ENCODE measurements at regions of chr4 and their contacts with region 1.

Region 1: DNA sequence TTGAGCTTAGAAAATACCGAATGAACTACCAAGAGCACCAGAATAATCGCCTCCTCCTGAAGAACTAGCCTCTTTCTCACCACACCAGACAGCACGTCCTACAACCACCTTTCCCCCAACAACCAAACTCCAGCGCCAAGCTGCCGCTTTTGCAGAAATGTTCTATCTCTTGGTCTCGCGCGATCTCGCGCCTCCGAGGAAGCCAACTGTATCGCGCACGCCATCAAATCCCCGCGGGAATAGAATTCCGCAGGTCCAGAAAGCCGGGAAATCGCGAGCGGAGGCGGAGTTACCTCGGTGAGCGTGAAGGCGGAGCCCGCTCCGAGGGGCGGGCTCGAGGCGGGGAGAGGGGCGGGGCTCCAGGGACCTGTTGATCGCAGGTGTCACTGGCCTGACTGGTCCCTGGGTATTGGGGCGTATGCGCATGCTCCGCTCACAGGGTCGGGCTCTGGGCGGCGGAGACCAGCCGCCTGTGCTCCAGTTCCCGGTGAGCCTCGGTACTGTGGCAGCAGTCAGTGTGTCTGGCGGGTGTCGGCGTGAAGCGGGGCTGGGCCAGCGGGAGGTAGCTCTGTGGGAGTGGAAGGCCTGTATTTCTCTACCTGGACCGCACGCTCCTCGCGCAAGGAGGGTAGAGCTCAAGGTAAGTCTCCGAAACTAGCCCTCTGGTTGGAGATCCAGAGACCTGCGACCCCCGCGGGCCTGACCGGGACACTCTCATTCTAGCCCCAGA is at the start of gene USP53:
- DNase-seq: peak; percentile 99
- ATAC-seq: peak; percentile 92
- H3K4me3 Mint-ChIP-seq: peak within 1 kb of the TSS; percentile 86
- H3K27ac Mint-ChIP-seq: peak within 1 kb of the TSS; percentile 91
- H3K4me1 Mint-ChIP-seq: peaks cover 39% of the 10 kb centered on the region
- H3K27me3 Mint-ChIP-seq: no peaks in the 10 kb centered on the region
- total RNA-seq, gene USP53: 11.4 to 14.0 TPM

Region 2: DNA sequence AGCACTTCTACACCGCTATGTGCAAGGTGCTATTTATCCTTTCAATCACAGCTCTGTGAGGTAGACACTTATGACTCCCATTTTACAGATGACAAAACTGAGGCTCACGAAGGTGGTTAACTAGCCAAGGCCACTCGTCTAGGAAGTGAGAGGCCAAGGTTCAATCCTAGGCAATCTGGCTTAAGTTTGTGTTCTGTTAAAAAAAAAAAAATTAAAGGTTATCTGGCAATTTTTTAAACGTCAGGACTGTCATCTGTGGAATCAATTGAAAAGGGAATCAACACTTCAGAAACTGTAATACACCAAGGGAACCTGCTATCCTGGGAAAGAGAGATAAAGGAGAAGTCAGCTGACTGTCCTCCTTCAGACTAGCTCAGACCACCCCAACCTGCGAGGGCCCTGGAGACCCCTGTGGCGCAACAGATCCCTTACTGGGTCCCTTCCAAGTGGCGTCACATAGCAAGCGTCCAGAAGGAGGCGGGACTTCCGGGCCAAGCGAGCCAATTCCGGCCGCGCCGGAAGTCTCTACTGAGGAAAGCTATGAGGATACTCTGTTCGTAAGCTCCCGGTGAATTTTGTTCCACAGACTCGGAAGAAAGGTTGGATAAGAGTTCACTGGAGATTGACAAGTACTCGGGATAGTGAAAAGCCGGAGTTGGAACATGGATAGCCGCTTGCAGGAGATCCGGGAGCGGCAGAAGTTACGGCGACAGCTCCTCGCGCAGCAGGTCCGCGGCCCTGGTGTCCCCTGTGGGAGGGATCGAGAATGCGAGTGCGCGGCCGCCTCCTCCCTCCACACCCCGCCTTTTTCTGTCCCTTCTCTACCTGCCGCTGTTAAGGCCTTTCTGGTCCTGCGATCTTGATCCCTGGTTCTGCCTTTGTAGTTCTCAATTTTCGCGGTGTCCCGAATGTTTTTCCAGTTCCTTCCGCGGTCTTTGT is 527.3 kb before region 1 on chr4 and contains the start of gene METTL14:
- CTCF ChIA-PET with region 1: no interaction called
- POLR2A ChIA-PET with region 1: no interaction called
- intact Hi-C with region 1: loop called in 1 of 2 experiments (anchors 2 kb)
- DNase-seq: peak; percentile 93
- ATAC-seq: peak; percentile 96
- H3K4me3 Mint-ChIP-seq: peak within 1 kb of the TSS; percentile 99
- H3K27ac Mint-ChIP-seq: peak within 1 kb of the TSS; percentile 90
- H3K4me1 Mint-ChIP-seq: peaks cover 24% of the 10 kb centered on the region
- H3K27me3 Mint-ChIP-seq: peaks cover 2% of the 10 kb centered on the region
- total RNA-seq, gene METTL14: 45.1 to 48.4 TPM

Region 3: DNA sequence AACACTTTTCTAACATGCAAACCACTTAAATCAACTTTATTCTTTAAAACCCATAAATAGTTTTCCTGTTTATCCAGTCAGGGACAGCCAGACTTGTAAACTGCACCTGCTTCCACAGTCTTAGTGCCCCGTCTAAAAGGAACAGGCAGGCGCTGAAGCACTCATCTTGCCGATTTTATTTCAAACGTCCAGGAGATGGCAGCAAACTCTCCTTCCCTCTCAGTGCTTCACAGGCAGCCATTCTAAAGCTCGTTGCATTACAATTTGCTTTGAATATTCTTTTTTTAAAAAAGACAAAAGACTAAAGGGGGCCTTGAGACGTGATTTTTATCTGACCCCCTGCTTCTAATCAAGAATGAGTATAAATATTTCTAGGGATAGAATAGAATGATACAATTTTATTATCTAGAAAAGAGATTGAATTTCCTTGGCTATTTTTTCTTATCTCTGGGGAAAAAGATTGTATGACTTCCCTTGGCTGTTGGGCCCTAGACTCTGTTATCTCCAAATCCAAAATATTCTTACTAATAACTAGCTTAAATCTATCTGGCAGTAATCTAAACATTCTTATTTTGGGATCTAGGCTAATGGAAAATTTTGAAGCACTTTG is 170.3 kb before region 1 on chr4:
- CTCF ChIA-PET with region 1: interaction called, 6 read pairs
- POLR2A ChIA-PET with region 1: no interaction called
- intact Hi-C with region 1: loop called (anchors 2 to 5 kb)
- DNase-seq: peak; percentile 71
- ATAC-seq: peak; percentile 85
- H3K4me3 Mint-ChIP-seq: no peak overlapping the region
- H3K27ac Mint-ChIP-seq: no peak overlapping the region
- H3K4me1 Mint-ChIP-seq: peaks cover 16% of the 10 kb centered on the region
- H3K27me3 Mint-ChIP-seq: no peaks in the 10 kb centered on the region

Region 4: DNA sequence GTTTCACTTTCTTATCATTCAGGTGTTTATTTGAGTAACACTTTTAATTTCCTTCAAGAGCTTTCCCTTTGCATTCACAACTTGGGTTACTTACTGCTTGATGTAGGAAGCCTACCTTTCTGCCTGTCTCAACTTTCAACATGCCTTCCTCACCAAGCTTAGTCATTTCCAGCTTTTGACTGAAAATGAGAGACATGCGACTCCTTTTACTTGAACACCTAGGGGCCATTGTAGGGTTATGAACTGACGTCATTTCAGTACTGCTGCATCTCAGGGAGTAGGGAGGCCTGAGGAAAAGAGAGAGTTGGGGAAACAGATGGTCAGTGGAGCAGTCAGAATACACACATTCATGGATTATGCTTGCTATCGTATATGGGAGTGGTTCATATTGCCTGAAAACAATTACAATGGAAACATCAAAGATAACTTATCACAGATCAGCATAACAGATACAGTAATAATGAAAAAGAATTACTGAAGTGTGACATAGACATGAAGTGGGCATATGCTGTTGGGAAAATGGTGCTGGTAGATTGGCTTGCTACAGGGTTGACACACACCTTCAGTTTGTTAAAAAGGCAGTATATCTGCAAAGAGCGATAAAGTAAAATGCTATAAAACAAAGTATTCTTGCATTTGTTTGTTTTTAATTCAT is 25.8 kb after region 1 on chr4:
- CTCF ChIA-PET with region 1: interaction called, 7 read pairs
- POLR2A ChIA-PET with region 1: interaction called, 15 read pairs
- intact Hi-C with region 1: loop called (anchors 1 kb)
- DNase-seq: peak; percentile 46
- ATAC-seq: peak; percentile 98
- H3K4me3 Mint-ChIP-seq: peak overlapping the region; percentile 24
- H3K27ac Mint-ChIP-seq: peak overlapping the region; percentile 75
- H3K4me1 Mint-ChIP-seq: peaks cover 44% of the 10 kb centered on the region
- H3K27me3 Mint-ChIP-seq: no peaks in the 10 kb centered on the region

Region 5: GRCh38 chr4:119286377-119287002 is 74.1 kb after region 1 on chr4:
- CTCF ChIA-PET with region 1: no interaction called
- POLR2A ChIA-PET with region 1: no interaction called
- intact Hi-C with region 1: loop called in 1 of 2 experiments (anchors 2 kb)
- DNase-seq: peak; percentile 47
- ATAC-seq: no peak
- H3K4me3 Mint-ChIP-seq: no peak overlapping the region
- H3K27ac Mint-ChIP-seq: no peak overlapping the region
- H3K4me1 Mint-ChIP-seq: peaks cover 12% of the 10 kb centered on the region
- H3K27me3 Mint-ChIP-seq: no peaks in the 10 kb centered on the region

Measured in activated CD4-positive, alpha-beta T cell treated with anti-CD3 and anti-CD28 coated beads for 36 hours (primary cell).